ENCODE measurements at regions of chr18 and their contacts with region 1.

Region 1: DNA sequence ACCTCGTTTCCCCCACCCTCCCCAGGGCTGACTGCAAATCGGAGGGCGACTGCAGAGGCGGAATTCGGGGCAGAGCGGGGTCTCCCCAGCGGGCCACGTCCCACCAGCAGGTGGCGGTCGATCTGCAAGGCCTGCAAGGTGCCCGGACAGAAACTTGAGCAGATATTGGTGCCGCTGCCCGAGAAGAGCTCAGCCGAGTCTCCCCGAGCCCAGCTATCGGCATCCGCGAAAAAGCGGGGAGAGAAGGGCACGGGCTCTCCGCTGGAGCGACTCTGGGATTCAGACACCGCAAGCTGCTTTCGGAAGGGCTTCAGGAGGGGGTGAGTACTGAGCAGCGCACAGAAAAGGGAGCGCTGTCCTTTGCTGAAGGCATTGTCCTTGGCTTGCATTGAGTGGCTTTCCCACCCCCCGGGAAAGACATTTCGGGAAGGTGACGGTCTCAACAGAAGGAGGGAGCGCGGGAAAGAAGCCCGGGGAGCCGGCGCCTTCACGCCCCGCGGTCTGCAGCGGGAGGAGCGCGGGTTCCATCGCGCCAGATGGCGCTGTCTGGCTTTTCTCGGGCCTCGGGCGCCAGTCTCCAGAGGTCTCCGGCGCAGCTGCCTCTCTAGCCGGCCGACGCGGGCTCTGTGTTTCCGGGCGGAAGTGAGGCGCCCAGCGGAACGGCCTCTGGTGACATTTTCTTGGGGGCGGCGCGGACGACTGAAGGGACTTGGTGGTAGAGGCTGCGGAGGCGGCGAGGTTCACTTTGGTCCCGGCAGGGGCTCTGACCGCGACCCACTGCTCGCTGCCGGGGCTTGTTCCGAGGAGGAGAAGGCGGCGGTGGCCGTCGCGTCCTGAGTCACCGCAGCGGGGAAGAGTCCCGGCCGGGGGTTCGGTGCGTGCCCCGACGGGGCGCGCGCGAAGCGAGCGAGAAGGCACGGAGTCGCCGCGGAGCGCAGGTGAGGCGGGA is 69.5 kb downstream of the HAUS1 start:
- DNase-seq: peak; percentile 85 to 93 (median 90)
- ATAC-seq: peak; percentile 96
- H3K4me3 ChIP-seq: peak overlapping the region; percentile 98
- H3K4me3 Mint-ChIP-seq: peak overlapping the region; percentile 93 to 99 (median 98)
- H3K27ac ChIP-seq: peak overlapping the region; percentile 84
- H3K27ac Mint-ChIP-seq: peak overlapping the region; percentile 93 to 99 (median 96)
- H3K4me1 ChIP-seq: peaks cover 13 to 14% of the 10 kb centered on the region in 2 donors
- H3K4me1 Mint-ChIP-seq: peaks cover 34 to 48% (median 42%) of the 10 kb centered on the region in 7 donors
- H3K27me3 ChIP-seq: no peaks in the 10 kb centered on the region
- H3K27me3 Mint-ChIP-seq: peaks cover 0 to 3% (median 0%) of the 10 kb centered on the region in 5 donors

Region 2: GRCh38 chr18:46104128-46104911 is 69.3 kb before region 1 on chr18 and contains the start of gene HAUS1:
- CTCF ChIA-PET with region 1: interaction called, 3 read pairs
- POLR2A ChIA-PET with region 1: no interaction called
- intact Hi-C with region 1: loop called (anchors 1 kb)
- DNase-seq: peak; percentile 62 to 87 (median 69)
- ATAC-seq: peak; percentile 98
- H3K4me3 ChIP-seq: peak within 1 kb of the TSS; percentile 89
- H3K4me3 Mint-ChIP-seq: peak within 1 kb of the TSS; percentile 93 to 99 (median 98)
- H3K27ac ChIP-seq: peak within 1 kb of the TSS; percentile 80
- H3K27ac Mint-ChIP-seq: peak within 1 kb of the TSS; percentile 73 to 97 (median 91)
- H3K4me1 ChIP-seq: peaks cover 5% of the 10 kb centered on the region in 2 donors
- H3K4me1 Mint-ChIP-seq: peaks cover 11 to 37% (median 26%) of the 10 kb centered on the region in 7 donors
- H3K27me3 ChIP-seq: no peaks in the 10 kb centered on the region
- H3K27me3 Mint-ChIP-seq: no peaks in the 10 kb centered on the region
- total RNA-seq, gene HAUS1: 10.4 to 47.2 (median 15.2) TPM

Region 3: DNA sequence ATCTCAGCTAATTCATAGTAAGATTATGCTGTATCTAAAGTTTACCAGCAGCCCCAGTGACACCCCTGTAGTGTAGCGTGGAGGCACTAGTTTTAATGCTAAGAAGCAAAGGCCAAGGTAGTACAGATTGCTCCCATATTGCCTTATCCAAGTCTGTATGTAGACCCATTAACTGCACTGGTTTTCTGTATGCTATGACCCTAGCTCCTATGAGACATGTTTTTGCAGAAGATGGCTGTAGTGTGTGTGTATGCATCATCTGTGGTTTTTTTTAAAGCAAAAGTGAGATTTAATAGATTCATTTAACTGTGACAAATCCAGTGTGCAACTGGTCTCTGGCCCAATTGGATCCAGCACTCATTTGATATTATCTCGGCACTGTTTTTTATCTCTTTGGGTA is 17.0 kb after region 1 on chr18:
- CTCF ChIA-PET with region 1: interaction called, 9 read pairs
- POLR2A ChIA-PET with region 1: interaction called, 3 read pairs
- intact Hi-C with region 1: loop called in 1 of 2 experiments (anchors 2 kb)
- DNase-seq: no peak
- ATAC-seq: no peak
- H3K4me3 ChIP-seq: no peak overlapping the region
- H3K4me3 Mint-ChIP-seq: peak overlapping the region in 1 of 10 donors; percentile 9
- H3K27ac ChIP-seq: no peak overlapping the region
- H3K27ac Mint-ChIP-seq: peak overlapping the region in 5 of 9 donors; percentile 1 to 43 (median 21)
- H3K4me1 ChIP-seq: peaks cover 0 to 9% of the 10 kb centered on the region in 2 donors
- H3K4me1 Mint-ChIP-seq: peaks cover 8 to 47% (median 39%) of the 10 kb centered on the region in 7 donors
- H3K27me3 ChIP-seq: no peaks in the 10 kb centered on the region
- H3K27me3 Mint-ChIP-seq: no peaks in the 10 kb centered on the region

Region 4: DNA sequence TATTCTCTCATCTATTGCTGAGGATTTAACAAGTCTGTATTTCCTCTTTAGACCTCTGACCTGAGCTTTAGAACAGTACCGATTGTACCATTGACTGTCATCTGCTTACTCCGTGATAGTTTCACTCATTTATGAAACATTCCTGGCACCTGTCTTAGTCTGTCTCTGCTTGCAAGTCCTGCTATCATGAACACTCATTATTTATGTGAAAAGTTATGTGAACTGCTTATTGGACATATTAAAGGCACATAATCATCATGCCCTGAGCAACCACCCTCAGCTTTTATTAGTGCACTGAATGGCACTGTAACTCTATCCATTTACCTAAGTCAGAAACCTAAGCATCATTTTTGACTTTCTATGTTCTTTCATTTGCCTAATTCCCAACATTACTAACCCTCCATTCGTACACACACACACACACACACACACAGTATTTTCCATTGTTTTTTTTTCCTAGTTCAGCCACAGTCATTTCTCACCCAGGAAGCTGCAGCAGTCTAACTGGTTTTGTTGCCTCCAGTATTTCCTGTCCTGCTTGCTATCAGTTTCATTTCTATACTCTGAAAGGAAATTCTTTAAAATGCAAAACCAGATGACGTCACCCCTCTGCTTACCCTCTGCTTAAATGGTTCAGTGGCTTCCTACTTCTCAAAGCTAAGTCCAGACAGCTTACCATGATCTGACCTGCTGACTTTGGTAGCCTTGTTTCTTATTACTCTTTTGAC is 76.6 kb after region 1 on chr18:
- CTCF ChIA-PET with region 1: interaction called, 13 read pairs
- POLR2A ChIA-PET with region 1: interaction called, 3 read pairs
- intact Hi-C with region 1: loop called (anchors 1 kb)
- DNase-seq: peak in 8 of 9 donors; percentile 32 to 82 (median 72)
- ATAC-seq: peak; percentile 94
- H3K4me3 ChIP-seq: peak overlapping the region; percentile 41
- H3K4me3 Mint-ChIP-seq: peak overlapping the region; percentile 74 to 95 (median 83)
- H3K27ac ChIP-seq: peak overlapping the region; percentile 75
- H3K27ac Mint-ChIP-seq: peak overlapping the region; percentile 89 to 98 (median 95)
- H3K4me1 ChIP-seq: peaks cover 19 to 21% of the 10 kb centered on the region in 2 donors
- H3K4me1 Mint-ChIP-seq: peaks cover 35 to 74% (median 69%) of the 10 kb centered on the region in 7 donors
- H3K27me3 ChIP-seq: no peaks in the 10 kb centered on the region
- H3K27me3 Mint-ChIP-seq: no peaks in the 10 kb centered on the region

Region 5: GRCh38 chr18:46324087-46324958 is 150.7 kb after region 1 on chr18:
- CTCF ChIA-PET with region 1: no interaction called
- POLR2A ChIA-PET with region 1: no interaction called
- intact Hi-C with region 1: no loop called
- DNase-seq: no peak
- ATAC-seq: peak; percentile 79
- H3K4me3 ChIP-seq: no peak overlapping the region
- H3K4me3 Mint-ChIP-seq: no peak overlapping the region
- H3K27ac ChIP-seq: no peak overlapping the region
- H3K27ac Mint-ChIP-seq: peak overlapping the region in 2 of 9 donors; percentile 4 to 31
- H3K4me1 ChIP-seq: peaks cover 0 to 2% of the 10 kb centered on the region in 2 donors
- H3K4me1 Mint-ChIP-seq: peaks cover 0 to 8% (median 0%) of the 10 kb centered on the region in 7 donors
- H3K27me3 ChIP-seq: no peaks in the 10 kb centered on the region
- H3K27me3 Mint-ChIP-seq: peaks cover 0 to 13% (median 0%) of the 10 kb centered on the region in 5 donors

Region 6: GRCh38 chr18:46343931-46344372 is 170.3 kb after region 1 on chr18:
- CTCF ChIA-PET with region 1: no interaction called
- POLR2A ChIA-PET with region 1: interaction called, 3 read pairs
- intact Hi-C with region 1: loop called in 1 of 2 experiments (anchors 5 kb)
- DNase-seq: peak; percentile 16 to 59 (median 46)
- ATAC-seq: peak; percentile 89
- H3K4me3 ChIP-seq: no peak overlapping the region
- H3K4me3 Mint-ChIP-seq: peak overlapping the region in 9 of 10 donors; percentile 3 to 75 (median 51)
- H3K27ac ChIP-seq: no peak overlapping the region
- H3K27ac Mint-ChIP-seq: peak overlapping the region; percentile 3 to 86 (median 71)
- H3K4me1 ChIP-seq: peaks cover 6 to 16% of the 10 kb centered on the region in 2 donors
- H3K4me1 Mint-ChIP-seq: peaks cover 21 to 72% (median 25%) of the 10 kb centered on the region in 7 donors
- H3K27me3 ChIP-seq: no peaks in the 10 kb centered on the region
- H3K27me3 Mint-ChIP-seq: peaks cover 0 to 6% (median 3%) of the 10 kb centered on the region in 5 donors

Region 7: DNA sequence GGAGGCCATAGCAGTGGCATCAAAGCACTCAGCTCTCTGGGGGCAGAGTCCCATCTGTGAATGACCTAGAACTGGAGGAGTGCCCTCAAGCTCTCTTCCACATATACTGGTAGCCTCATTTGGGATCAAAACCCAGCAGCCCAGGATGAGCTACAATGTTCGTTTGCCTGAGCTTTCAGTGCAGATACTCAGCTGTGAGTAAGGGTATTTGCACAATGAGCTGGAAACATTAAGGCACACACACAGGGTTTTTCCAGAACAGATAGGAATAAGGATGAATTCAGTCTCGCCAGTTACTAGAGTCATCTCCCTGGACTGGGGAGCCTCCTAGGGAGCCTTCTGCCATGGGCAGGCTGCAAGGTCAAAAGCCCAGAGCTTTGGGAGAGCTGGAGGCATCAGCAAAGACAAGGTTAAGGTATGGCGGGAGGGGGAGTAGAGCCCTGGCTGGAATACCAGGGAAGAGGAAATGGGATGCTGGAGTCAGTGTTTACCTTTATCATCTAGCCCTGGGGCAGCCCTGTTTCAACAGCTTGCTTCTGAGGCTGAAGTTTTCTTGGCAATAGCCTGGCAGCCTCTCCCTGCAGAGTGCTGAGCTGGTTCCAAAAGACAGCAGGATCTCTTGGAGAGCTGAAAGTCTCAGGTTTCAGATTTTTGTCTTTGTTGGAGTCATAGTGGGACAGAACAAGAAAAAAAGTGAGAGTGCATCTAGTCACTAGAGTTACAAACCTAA is 295.7 kb after region 1 on chr18:
- CTCF ChIA-PET with region 1: no interaction called
- POLR2A ChIA-PET with region 1: no interaction called
- intact Hi-C with region 1: no loop called
- DNase-seq: no peak
- ATAC-seq: no peak
- H3K4me3 ChIP-seq: no peak overlapping the region
- H3K4me3 Mint-ChIP-seq: no peak overlapping the region
- H3K27ac ChIP-seq: no peak overlapping the region
- H3K27ac Mint-ChIP-seq: no peak overlapping the region
- H3K4me1 ChIP-seq: no peaks in the 10 kb centered on the region
- H3K4me1 Mint-ChIP-seq: peaks cover 0 to 4% (median 0%) of the 10 kb centered on the region in 7 donors
- H3K27me3 ChIP-seq: no peaks in the 10 kb centered on the region
- H3K27me3 Mint-ChIP-seq: peaks cover 0 to 27% (median 11%) of the 10 kb centered on the region in 5 donors

Region 8: GRCh38 chr18:46660955-46661749 is 487.5 kb after region 1 on chr18:
- CTCF ChIA-PET with region 1: interaction called, 23 read pairs
- POLR2A ChIA-PET with region 1: interaction called, 4 read pairs
- intact Hi-C with region 1: loop called (anchors 1 kb)
- DNase-seq: no peak
- ATAC-seq: no peak
- H3K4me3 ChIP-seq: no peak overlapping the region
- H3K4me3 Mint-ChIP-seq: no peak overlapping the region
- H3K27ac ChIP-seq: no peak overlapping the region
- H3K27ac Mint-ChIP-seq: no peak overlapping the region
- H3K4me1 ChIP-seq: no peaks in the 10 kb centered on the region
- H3K4me1 Mint-ChIP-seq: no peaks in the 10 kb centered on the region
- H3K27me3 ChIP-seq: no peaks in the 10 kb centered on the region
- H3K27me3 Mint-ChIP-seq: peaks cover 0 to 10% (median 0%) of the 10 kb centered on the region in 5 donors

Region 9: DNA sequence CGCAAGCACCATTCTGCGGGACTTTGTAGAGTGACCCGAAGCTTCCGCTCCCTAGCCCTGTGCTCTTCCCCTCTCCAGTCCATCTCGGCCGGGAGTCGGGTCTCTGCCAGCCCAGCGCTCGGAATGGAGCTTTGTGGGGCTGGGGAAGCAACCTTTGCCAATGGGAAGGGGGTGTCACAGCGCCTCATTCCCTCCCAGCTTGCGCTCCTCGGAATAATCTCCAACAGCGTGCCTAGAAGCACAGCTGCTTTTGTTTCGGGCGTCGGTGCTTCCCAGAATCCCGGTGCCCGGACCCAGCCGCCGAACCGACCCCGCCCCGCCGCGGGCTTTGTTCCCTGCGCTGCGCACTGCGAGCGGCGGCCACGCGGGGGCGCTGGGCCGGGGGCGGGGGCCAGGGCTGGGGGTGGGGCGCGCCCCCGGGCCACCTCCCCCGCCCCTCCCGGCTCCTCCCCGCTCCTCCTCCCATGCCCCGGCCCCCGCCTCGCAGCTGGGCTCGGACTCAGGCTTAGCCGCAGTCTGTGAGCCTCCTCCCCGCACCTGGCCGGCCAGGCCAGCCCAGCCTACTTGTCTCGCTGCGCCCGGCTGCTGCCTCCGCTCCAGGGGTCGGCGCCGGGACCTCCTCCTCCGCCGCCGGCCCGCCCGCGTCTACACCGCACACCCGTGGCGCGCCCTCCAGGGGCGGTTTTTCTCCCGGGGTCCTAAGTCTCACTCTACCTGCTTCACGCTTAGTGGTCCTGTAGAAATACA is 1834.5 kb after region 1 on chr18:
- CTCF ChIA-PET with region 1: no interaction called
- POLR2A ChIA-PET with region 1: no interaction called
- intact Hi-C with region 1: no loop called
- DNase-seq: peak; percentile 12 to 57 (median 42)
- ATAC-seq: peak; percentile 92
- H3K4me3 ChIP-seq: peak overlapping the region; percentile 39
- H3K4me3 Mint-ChIP-seq: peak overlapping the region; percentile 72 to 83 (median 76)
- H3K27ac ChIP-seq: no peak overlapping the region
- H3K27ac Mint-ChIP-seq: peak overlapping the region in 1 of 9 donors; percentile 31
- H3K4me1 ChIP-seq: peaks cover 3 to 6% of the 10 kb centered on the region in 2 donors
- H3K4me1 Mint-ChIP-seq: peaks cover 0 to 8% (median 6%) of the 10 kb centered on the region in 7 donors
- H3K27me3 ChIP-seq: no peaks in the 10 kb centered on the region
- H3K27me3 Mint-ChIP-seq: peaks cover 13 to 40% (median 22%) of the 10 kb centered on the region in 5 donors

Measured in naive thymus-derived CD4-positive, alpha-beta T cell (primary cell).